ENCODE measurements at regions of chr7 and their contacts with region 1.

Region 1: DNA sequence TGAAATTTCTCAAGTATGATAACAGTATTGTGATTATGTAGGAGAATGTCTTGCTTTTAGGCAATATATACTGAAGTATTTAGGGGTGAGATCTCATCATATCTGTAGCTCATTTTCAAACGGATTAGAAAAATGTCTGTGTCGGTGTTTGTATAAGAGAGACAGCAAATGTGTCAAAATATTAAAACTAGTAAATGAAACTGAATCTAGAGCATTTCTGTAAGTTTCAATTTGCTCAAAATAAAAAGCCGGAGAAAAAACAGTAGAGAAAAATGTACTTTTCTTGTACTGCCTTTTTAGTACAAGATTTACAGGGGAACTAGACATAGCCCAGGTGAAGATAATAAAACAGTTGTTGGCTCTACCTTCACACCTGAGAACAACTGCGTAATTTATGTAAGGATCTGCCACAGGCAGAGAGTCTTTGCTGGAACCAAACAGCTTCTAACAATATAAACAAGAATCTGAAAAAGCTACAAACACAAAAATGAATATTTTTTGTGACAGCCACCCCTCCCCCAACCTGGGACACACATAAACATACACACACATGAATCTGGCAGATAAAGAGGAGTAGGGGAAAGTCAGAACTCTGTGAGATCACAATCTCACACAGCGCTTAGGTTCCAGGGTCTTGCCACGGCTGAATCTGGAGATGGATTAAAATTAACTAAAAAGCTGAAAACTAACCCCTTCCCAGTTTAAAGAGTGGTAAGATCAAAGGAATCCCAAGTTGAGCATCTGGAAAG is 153.3 kb downstream of the AVL9 start:
- DNase-seq: no peak
- ATAC-seq: no peak
- H3K4me3 ChIP-seq: no peak overlapping the region
- H3K4me3 Mint-ChIP-seq: no peak overlapping the region
- H3K27ac ChIP-seq: no peak overlapping the region
- H3K27ac Mint-ChIP-seq: no peak overlapping the region
- H3K4me1 ChIP-seq: no peaks in the 10 kb centered on the region
- H3K4me1 Mint-ChIP-seq: no peaks in the 10 kb centered on the region
- H3K27me3 ChIP-seq: peaks cover 0 to 5% of the 10 kb centered on the region in 2 experiments
- H3K27me3 Mint-ChIP-seq: peaks cover 23% of the 10 kb centered on the region
- CTCF ChIP-seq: no peak

Region 2: DNA sequence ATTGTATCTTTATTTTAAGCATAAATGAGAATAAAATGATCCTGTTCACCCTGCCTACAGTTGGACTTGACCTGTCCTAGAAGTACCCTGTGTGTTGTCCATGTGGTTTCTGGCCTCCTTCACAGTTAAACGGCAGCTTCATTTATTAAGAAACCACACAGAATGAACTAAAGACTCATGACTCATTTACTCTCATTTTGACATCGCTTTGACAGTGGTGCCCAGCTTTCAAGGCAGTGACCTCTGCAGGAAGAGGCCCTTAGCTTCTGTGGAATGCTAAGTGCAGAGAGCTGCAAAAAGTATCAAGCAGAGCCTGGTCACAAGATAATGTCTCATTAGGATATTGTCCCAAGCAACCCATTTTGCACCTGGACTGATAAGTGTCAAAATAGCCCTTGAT is 59.9 kb before region 1 on chr7:
- CTCF ChIA-PET with region 1: no interaction called
- POLR2A ChIA-PET with region 1: no interaction called
- intact Hi-C with region 1: no loop called
- DNase-seq: no peak
- ATAC-seq: no peak
- H3K4me3 ChIP-seq: no peak overlapping the region
- H3K4me3 Mint-ChIP-seq: no peak overlapping the region
- H3K27ac ChIP-seq: no peak overlapping the region
- H3K27ac Mint-ChIP-seq: peak overlapping the region; percentile 44
- H3K4me1 ChIP-seq: no peaks in the 10 kb centered on the region
- H3K4me1 Mint-ChIP-seq: peaks cover 5% of the 10 kb centered on the region
- H3K27me3 ChIP-seq: no peaks in the 10 kb centered on the region
- H3K27me3 Mint-ChIP-seq: no peaks in the 10 kb centered on the region
- CTCF ChIP-seq: no peak

Region 3: DNA sequence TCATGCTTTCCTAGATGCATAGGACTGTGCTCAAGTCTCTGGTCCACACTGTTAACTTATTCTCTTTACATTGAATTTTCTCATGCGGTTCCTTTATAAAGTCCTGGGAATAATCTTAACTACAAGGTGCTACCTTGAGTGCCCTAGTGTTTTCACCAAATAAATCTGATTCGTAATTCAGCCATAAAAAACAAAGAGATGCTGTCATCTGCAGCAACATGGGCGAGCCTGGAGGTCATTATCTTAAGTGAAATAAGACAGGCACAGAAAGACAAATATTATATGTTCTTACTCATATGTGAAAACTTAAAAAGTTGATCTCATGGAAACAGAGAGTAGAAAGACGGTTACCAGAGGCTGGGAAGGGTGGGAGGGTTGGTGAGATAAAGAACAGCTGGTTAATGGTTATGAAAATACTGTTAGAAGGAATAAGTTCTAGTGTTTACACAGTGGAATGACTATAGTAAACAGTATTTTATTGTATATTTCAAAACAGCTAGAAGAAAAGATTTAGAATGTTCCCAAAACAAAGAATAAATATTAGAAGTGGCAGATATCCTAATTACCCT is 375.7 kb after region 1 on chr7:
- CTCF ChIA-PET with region 1: no interaction called
- POLR2A ChIA-PET with region 1: no interaction called
- intact Hi-C with region 1: loop called in 1 of 2 experiments (anchors 5 kb)
- DNase-seq: no peak
- ATAC-seq: no peak
- H3K4me3 ChIP-seq: no peak overlapping the region
- H3K4me3 Mint-ChIP-seq: no peak overlapping the region
- H3K27ac ChIP-seq: no peak overlapping the region
- H3K27ac Mint-ChIP-seq: no peak overlapping the region
- H3K4me1 ChIP-seq: no peaks in the 10 kb centered on the region
- H3K4me1 Mint-ChIP-seq: peaks cover 4% of the 10 kb centered on the region
- H3K27me3 ChIP-seq: no peaks in the 10 kb centered on the region
- H3K27me3 Mint-ChIP-seq: no peaks in the 10 kb centered on the region
- CTCF ChIP-seq: no peak